ENCODE measurements at regions of chr6 and their contacts with region 1.

Region 1: DNA sequence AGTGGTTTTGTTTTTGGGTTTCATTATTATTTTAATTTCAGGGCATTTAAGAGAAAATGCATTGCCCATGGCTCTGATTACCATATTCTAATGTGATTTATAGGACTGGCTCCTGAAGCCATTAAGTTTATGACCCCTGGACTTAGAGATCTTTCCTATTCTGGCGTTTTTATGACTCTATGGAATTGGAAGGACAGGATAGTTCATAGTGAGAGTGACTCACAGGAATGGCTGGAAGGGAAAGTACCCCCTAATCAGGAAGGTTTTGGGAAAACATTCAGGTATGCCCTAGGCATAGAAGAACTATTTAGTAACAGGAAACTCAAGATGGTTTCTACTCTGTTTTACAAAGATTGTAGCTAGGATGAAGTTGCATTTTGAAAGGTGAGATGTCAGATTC is 108.6 kb upstream of the SLC2A12 start:
- DNase-seq: no peak
- ATAC-seq: no peak
- H3K4me3 Mint-ChIP-seq: no peak overlapping the region
- H3K27ac Mint-ChIP-seq: no peak overlapping the region
- H3K4me1 Mint-ChIP-seq: no peaks in the 10 kb centered on the region
- H3K27me3 Mint-ChIP-seq: no peaks in the 10 kb centered on the region
- CTCF ChIP-seq: no peak

Region 2: GRCh38 chr6:132537145-132537544 is 1623.9 kb before region 1 on chr6:
- CTCF ChIA-PET with region 1: no interaction called
- POLR2A ChIA-PET with region 1: no interaction called
- intact Hi-C with region 1: no loop called
- DNase-seq: no peak
- ATAC-seq: no peak
- H3K4me3 Mint-ChIP-seq: no peak overlapping the region
- H3K27ac Mint-ChIP-seq: no peak overlapping the region
- H3K4me1 Mint-ChIP-seq: no peaks in the 10 kb centered on the region
- H3K27me3 Mint-ChIP-seq: peaks cover 18% of the 10 kb centered on the region
- CTCF ChIP-seq: no peak

Region 3: DNA sequence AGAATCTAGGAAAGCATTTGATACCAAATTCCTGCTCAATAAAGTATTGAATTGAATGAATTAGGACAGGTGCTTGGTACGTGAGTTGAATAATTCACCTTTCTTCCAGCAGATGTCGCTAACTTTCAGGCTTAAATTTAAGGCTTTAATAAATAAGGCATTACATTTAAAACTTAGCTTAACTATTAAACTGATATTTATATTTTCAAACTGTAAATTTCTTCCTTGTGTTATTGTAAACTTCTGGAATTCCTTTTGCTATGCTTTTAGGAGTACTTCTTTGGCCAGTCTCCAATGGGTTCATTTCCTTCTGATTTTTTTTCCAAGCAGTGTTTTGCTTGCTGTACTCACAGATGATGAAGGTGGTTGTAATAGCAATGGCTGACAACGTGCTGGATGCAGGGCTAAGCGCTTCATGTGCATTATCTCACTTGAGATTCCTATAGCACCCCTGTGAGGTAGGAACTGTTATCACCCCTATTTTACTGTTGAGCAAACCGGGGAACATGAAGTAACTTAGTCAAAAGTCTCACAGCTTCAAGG is 37.3 kb before region 1 on chr6:
- CTCF ChIA-PET with region 1: interaction called, 7 read pairs
- POLR2A ChIA-PET with region 1: no interaction called
- intact Hi-C with region 1: loop called (anchors 5 kb)
- DNase-seq: no peak
- ATAC-seq: peak; percentile 52
- H3K4me3 Mint-ChIP-seq: no peak overlapping the region
- H3K27ac Mint-ChIP-seq: no peak overlapping the region
- H3K4me1 Mint-ChIP-seq: no peaks in the 10 kb centered on the region
- H3K27me3 Mint-ChIP-seq: peaks cover 2% of the 10 kb centered on the region
- CTCF ChIP-seq: peak; percentile 62

Region 4: GRCh38 chr6:134822920-134823709 is 662.1 kb after region 1 on chr6:
- CTCF ChIA-PET with region 1: interaction called, 46 read pairs
- POLR2A ChIA-PET with region 1: no interaction called
- intact Hi-C with region 1: loop called (anchors 1 kb)
- DNase-seq: no peak
- ATAC-seq: peak; percentile 77
- H3K4me3 Mint-ChIP-seq: no peak overlapping the region
- H3K27ac Mint-ChIP-seq: no peak overlapping the region
- H3K4me1 Mint-ChIP-seq: peaks cover 10% of the 10 kb centered on the region
- H3K27me3 Mint-ChIP-seq: peaks cover 2% of the 10 kb centered on the region
- CTCF ChIP-seq: peak; percentile 45

Region 5: DNA sequence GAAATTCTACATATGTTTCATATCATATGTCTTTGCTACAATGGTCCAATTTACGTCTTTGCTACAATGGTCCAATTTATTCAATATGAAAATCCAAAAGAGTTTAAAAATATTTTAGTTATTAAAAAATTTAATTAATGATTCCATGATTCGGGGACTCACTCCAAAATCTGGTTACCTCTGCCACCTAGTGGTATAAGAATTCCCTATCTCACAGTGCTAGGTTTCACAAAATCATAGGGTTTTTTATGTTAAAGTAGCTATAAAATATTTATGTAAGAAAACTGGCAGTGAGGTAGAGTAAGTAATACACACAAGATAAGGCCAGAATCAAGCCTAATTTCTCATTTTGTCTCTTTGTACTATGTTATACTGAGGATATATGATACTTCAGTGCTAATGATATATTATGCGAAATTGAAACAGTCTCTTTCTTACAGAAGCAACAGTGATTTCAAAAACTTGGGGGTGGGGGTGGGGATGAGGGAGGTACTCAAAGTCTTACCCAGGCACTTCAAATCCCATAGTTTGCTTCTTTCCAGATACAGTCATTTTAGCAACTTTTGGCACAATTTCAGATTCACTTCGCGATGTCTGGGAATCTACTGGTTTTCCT is 841.3 kb after region 1 on chr6:
- CTCF ChIA-PET with region 1: no interaction called
- POLR2A ChIA-PET with region 1: no interaction called
- intact Hi-C with region 1: loop called (anchors 1 kb)
- DNase-seq: no peak
- ATAC-seq: peak; percentile 37
- H3K4me3 Mint-ChIP-seq: no peak overlapping the region
- H3K27ac Mint-ChIP-seq: no peak overlapping the region
- H3K4me1 Mint-ChIP-seq: peaks cover 7% of the 10 kb centered on the region
- H3K27me3 Mint-ChIP-seq: no peaks in the 10 kb centered on the region
- CTCF ChIP-seq: no peak

Region 6: GRCh38 chr6:135423649-135424128 is 1262.7 kb after region 1 on chr6:
- CTCF ChIA-PET with region 1: no interaction called
- POLR2A ChIA-PET with region 1: no interaction called
- intact Hi-C with region 1: loop called (anchors 5 kb)
- DNase-seq: no peak
- ATAC-seq: peak; percentile 60
- H3K4me3 Mint-ChIP-seq: no peak overlapping the region
- H3K27ac Mint-ChIP-seq: no peak overlapping the region
- H3K4me1 Mint-ChIP-seq: no peaks in the 10 kb centered on the region
- H3K27me3 Mint-ChIP-seq: no peaks in the 10 kb centered on the region
- CTCF ChIP-seq: no peak

Region 7: DNA sequence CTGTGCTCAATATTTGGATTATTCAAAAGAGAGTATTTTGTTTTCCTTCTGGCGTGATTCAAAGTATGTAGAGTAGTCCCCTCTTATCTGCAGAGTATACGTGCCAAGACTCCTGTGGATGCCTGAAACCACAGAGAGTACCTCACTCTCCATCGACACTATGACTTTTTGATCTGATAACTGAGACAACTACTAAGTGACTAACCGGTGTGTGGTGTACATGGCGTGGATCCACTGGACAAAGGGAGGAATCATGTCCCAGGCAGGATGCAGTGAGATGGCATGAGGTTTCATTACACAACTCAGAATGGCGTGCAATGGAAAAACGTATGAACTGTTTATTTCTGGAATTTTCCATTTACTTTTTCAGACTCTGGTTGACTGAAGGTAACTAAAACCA is 1578.3 kb after region 1 on chr6:
- CTCF ChIA-PET with region 1: no interaction called
- POLR2A ChIA-PET with region 1: no interaction called
- intact Hi-C with region 1: no loop called
- DNase-seq: no peak
- ATAC-seq: no peak
- H3K4me3 Mint-ChIP-seq: no peak overlapping the region
- H3K27ac Mint-ChIP-seq: no peak overlapping the region
- H3K4me1 Mint-ChIP-seq: no peaks in the 10 kb centered on the region
- H3K27me3 Mint-ChIP-seq: peaks cover 2% of the 10 kb centered on the region
- CTCF ChIP-seq: no peak

Measured in activated B cell treated with CpG ODN at 0.5 μM for 24 hours (primary cell).